ENCODE measurements at regions of chr19 and their contacts with region 1.

Region 1: DNA sequence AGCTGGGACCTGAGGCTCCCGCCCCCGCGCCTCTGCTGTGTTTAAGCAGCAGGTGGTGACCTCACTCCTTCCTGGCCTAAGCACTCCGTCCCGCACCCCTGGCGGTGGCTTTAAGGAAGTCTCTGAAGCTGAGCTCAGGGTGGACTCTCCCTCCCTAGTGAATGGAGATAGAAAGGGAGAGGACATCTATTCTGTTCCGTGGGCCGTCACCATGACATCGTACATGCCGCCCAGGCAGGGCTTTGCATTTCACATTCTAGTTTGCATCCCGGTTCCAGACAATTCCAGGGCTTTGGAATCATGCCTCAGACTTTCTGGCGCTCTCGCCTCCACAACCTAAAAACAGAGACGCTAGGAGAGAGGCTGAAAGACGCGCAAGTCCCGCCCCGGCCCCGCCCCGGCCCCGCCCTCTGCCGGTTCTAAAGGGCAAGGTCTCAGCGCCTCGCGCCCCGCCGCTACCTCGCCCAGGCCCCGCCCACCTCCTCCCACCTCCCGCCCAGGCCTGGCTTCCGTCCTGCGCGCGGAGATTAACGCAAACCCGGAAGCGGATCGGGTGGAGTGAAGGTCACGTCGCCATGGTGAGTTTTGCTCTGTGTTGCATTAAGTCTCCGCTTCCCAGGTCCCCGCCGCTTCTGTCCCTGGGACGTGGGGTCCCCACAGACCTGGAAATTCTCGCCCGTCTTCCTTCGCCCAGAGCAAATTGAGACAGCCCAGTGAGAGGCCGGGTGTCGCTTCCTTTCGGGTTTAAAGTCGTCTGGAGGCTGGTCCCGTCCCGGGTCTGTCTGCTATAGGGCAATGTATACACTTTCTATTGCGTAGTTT is at the start of gene ZNF808:
- DNase-seq: peak; percentile 85
- H3K4me3 ChIP-seq: peak within 1 kb of the TSS; percentile 78 to 97 (median 84)
- H3K27ac ChIP-seq: peak within 1 kb of the TSS; percentile 86
- H3K4me1 ChIP-seq: no peaks in the 10 kb centered on the region
- H3K27me3 ChIP-seq: no peaks in the 10 kb centered on the region
- CTCF ChIP-seq: peak; percentile 46 to 80
- total RNA-seq, gene ZNF808: 14.1 to 21.3 TPM

Region 2: GRCh38 chr19:52307275-52307674 is 220.1 kb before region 1 on chr19:
- CTCF ChIA-PET with region 1: no interaction called
- dilution Hi-C with region 1: no loop called
- in situ Hi-C with region 1: loop called in 1 of 2 experiments (anchors 25 kb)
- intact Hi-C with region 1: no loop called
- DNase-seq: peak; percentile 17
- H3K4me3 ChIP-seq: no peak overlapping the region
- H3K27ac ChIP-seq: no peak overlapping the region
- H3K4me1 ChIP-seq: no peaks in the 10 kb centered on the region
- H3K27me3 ChIP-seq: no peaks in the 10 kb centered on the region
- CTCF ChIP-seq: no peak

Region 3: DNA sequence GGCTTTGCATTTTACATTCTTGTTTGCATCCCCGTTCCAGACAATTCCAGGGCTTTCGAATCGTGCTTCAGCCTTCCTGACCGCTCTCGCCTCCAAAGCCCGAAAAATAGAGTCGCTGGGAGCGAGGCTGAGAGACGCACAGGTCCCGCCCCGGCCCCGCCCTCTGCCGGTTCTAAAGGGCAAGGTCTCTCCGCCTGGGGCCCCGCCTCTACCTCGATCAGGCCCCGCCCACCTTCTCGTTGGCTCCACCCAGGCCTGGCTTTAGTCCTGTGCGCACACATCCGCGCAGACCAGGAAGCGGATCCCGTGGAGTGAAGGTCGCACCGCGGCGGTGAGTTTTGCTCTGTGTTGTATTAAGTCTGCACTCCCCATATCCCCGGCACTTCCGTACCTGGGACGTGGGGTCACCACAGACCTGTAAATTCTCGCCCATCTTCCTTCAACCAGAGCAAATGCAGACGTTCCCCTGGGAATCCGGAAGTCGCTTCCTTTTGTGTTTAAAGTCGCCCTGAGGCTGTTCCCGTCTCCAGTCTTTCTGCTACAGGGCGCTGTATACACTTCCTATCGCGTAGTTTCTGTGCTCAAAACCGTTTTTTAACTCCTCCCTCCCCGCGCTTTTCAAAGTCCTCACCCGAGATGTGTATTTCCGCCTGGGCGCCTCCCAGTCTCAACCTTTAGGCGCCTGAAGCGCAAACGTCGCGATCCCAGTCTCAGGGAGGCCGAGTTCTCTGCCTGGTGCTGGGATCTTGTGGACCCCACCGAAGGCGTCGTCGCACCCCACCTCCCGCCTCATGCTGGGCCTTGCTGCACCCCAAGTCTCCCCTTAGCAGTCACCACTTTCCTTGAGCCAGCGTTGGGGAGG is 42.9 kb after region 1 on chr19 and contains the start of gene ZNF701:
- CTCF ChIA-PET with region 1: no interaction called
- dilution Hi-C with region 1: no loop called
- in situ Hi-C with region 1: no loop called
- intact Hi-C with region 1: loop called (anchors 5 kb)
- DNase-seq: peak; percentile 91
- H3K4me3 ChIP-seq: peak within 1 kb of the TSS; percentile 66 to 92 (median 87)
- H3K27ac ChIP-seq: peak within 1 kb of the TSS; percentile 82
- H3K4me1 ChIP-seq: peaks cover 3% of the 10 kb centered on the region
- H3K27me3 ChIP-seq: no peaks in the 10 kb centered on the region
- CTCF ChIP-seq: peak in 1 of 2 donors; percentile 33
- total RNA-seq, gene ZNF701: 10.8 to 13.2 TPM

Region 4: DNA sequence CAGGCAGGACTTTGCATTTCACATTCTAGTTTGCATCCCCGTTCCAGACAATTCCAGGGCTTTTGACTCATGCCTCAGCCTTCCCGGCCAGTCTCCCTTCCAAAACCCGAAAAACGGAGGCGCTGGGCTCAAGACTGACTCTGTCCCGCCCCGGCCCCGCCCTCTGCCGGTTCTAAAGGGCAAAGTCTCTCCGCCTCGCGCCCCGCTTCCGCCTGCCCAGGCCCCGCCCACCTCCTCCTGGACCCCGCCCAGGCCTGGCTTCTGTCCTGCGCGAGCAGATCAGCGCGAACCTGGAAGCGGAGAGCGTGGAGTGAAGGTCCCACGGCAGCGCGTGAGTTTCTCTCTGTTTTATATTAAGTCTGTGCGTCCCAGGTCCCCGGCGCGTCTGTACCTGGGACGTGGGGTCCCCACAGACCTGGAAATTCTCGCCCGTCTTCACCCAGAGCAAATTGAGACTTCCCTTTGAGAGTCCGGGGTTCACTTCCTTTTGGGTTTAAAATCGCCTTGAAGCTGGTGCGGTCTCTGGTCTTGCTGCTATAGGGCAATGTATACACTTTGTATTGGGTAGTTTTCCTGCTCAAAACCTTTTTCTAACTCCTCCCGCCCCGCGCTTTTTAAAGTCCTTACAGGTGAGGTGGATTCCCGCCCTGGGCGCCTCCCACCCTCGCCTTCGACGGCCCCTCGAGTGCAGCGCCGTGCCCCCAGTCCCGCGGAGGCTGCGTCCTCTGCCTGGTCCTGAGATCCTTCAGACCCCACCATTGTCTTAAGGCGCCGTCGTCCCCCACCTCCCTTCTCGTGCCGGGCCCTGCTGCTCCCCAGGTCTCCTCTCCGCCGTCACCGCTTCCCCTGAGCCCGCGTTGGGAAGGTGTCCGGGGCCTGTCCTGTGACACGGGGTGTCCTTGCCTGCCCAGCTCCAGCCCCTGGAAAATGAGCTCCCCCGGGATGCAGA is 74.0 kb after region 1 on chr19:
- CTCF ChIA-PET with region 1: no interaction called
- dilution Hi-C with region 1: no loop called
- in situ Hi-C with region 1: no loop called
- intact Hi-C with region 1: loop called (anchors 2 kb)
- DNase-seq: peak; percentile 89
- H3K4me3 ChIP-seq: peak overlapping the region; percentile 63 to 69 (median 66)
- H3K27ac ChIP-seq: peak overlapping the region; percentile 3
- H3K4me1 ChIP-seq: peaks cover 12% of the 10 kb centered on the region
- H3K27me3 ChIP-seq: no peaks in the 10 kb centered on the region
- CTCF ChIP-seq: peak in 1 of 2 donors; percentile 42